ENCODE measurements at regions of chr12 and their contacts with region 1.

Region 1: DNA sequence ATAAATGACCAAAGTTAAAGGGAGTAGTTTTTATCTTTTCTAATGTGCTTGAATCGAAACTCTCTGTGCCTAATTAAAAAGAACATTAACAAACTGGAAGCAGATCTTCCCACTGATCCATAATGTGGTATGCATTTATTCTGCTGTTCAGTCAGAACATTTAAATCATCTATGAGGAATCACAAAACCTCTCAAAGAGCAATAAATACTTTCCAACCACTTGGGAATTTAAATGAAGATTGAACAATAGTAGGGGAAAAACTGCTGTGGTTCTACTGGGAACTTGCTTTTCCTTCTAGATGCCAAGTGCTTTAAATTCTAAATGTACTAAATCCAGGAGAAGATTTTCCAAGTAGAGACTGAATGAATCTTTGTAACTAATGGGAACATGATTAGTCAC is 12.3 kb upstream of the CHPT1 start:
- DNase-seq: no peak
- ATAC-seq: no peak
- H3K4me3 ChIP-seq: no peak overlapping the region
- H3K27ac ChIP-seq: no peak overlapping the region
- H3K4me1 ChIP-seq: no peaks in the 10 kb centered on the region
- H3K27me3 ChIP-seq: no peaks in the 10 kb centered on the region
- CTCF ChIP-seq: no peak

Region 2: GRCh38 chr12:101713059-101713682 is 28.1 kb after region 1 on chr12:
- intact Hi-C with region 1: loop called in 1 of 2 experiments (anchors 1 kb)
- DNase-seq: no peak
- ATAC-seq: peak; percentile 61 to 85 (median 72)
- H3K4me3 ChIP-seq: peak overlapping the region; percentile 23
- H3K27ac ChIP-seq: peak overlapping the region; percentile 42
- H3K4me1 ChIP-seq: peaks cover 23% of the 10 kb centered on the region
- H3K27me3 ChIP-seq: no peaks in the 10 kb centered on the region
- CTCF ChIP-seq: no peak